ENCODE measurements at regions of chr17 and their contacts with region 1.

Region 1: DNA sequence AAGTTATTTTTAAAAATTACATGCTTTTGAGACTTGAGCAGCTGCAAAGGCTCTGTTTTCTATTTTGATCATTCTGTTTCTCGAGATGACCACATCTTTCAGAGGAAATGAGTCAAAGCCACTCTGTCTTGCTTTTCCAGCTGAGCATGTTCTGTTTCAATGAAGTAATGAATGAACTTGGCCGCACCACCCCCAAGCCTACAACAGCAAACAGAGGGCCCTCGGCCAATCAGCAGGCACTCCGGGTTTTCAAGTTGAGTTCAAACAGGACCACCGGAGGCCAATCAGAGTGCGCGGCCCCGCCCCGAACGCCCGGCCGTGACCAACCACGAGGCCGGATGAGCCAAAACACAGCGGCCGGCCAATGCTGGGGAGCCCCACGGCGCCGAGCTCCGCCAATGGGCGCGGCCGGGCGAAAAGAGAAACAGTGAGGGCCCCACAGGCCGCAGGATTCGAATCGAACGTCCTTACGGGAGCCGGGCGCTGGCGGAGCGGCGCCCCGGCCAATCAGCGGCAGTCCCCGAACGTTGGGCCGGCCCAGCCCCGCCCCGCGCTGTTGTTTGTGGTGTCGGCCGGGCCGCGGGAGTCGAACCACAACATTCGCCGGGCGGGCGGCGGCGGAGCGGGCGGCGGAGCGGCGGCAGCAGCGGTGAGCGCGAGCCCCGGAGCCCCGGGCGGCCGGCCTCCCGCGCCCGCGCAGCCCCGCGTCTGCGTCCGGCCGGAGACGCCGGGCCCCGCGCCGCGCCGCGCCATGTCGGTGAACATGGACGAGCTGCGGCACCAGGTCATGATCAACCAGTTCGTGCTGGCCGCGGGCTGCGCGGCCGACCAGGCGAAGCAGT is at the start of gene UBALD2:
- DNase-seq: peak; percentile 99
- ATAC-seq: peak; percentile 81
- H3K4me3 ChIP-seq: peak within 1 kb of the TSS; percentile 84
- H3K27ac ChIP-seq: peak within 1 kb of the TSS; percentile 99
- H3K4me1 ChIP-seq: peaks cover 56% of the 10 kb centered on the region
- H3K27me3 ChIP-seq: no peaks in the 10 kb centered on the region
- CTCF ChIP-seq: no peak
- EP300 ChIP-seq: peak; percentile 91 to 94
- POLR2A ChIP-seq: peak; percentile 85; the same call in 1 of the 2 replicates
- RAD21 ChIP-seq: 0 out of 2 replicates have a peak, but pooled peaks have one; percentile 1
- polyA plus RNA-seq, gene UBALD2: 4.4 to 16.4 TPM

Region 2: GRCh38 chr17:75784473-75785015 is 480.4 kb before region 1 on chr17 and contains the start of gene UNK:
- CTCF ChIA-PET with region 1: no interaction called
- POLR2A ChIA-PET with region 1: interaction called, 4 read pairs
- RAD21 ChIA-PET with region 1: no interaction called
- SMC1A ChIA-PET with region 1: no interaction called
- in situ Hi-C with region 1: loop called (anchors 5 kb)
- intact Hi-C with region 1: loop called (anchors 10 kb)
- DNase-seq: peak; percentile 96
- ATAC-seq: peak; percentile 80
- H3K4me3 ChIP-seq: peak within 1 kb of the TSS; percentile 79
- H3K27ac ChIP-seq: peak within 1 kb of the TSS; percentile 97
- H3K4me1 ChIP-seq: peaks cover 22% of the 10 kb centered on the region
- H3K27me3 ChIP-seq: no peaks in the 10 kb centered on the region
- CTCF ChIP-seq: no peak
- EP300 ChIP-seq: no peak
- POLR2A ChIP-seq: no peak
- RAD21 ChIP-seq: no peak
- polyA plus RNA-seq, gene UNK: 8.9 to 11.9 TPM

Region 3: DNA sequence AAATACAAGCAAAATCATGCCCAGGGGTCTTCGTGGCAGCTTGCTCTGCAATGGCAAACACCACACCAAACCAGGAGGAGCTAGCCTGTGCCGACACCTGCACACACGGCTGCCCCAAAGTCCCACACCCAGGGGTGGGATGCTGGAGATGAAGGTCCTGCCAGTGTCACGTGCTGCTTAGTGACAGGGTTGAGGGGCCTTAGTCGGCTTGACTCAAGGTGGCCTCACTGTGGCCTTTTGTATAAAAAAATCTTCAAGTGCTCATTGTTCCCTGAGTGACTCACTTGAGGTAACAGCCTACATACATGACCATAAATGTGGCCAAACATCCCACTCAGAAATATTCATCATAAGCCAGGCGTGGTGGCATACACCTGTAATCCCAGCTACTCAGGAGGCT is 375.5 kb before region 1 on chr17:
- CTCF ChIA-PET with region 1: no interaction called
- POLR2A ChIA-PET with region 1: no interaction called
- RAD21 ChIA-PET with region 1: no interaction called
- SMC1A ChIA-PET with region 1: no interaction called
- in situ Hi-C with region 1: no loop called
- intact Hi-C with region 1: no loop called
- DNase-seq: no peak
- ATAC-seq: peak; percentile 44; the same call in 2 of the 3 replicates
- H3K4me3 ChIP-seq: no peak overlapping the region
- H3K27ac ChIP-seq: no peak overlapping the region
- H3K4me1 ChIP-seq: no peaks in the 10 kb centered on the region
- H3K27me3 ChIP-seq: no peaks in the 10 kb centered on the region
- CTCF ChIP-seq: no peak
- EP300 ChIP-seq: no peak
- POLR2A ChIP-seq: no peak
- RAD21 ChIP-seq: no peak

Region 4: GRCh38 chr17:76182016-76182764 is 82.8 kb before region 1 on chr17:
- CTCF ChIA-PET with region 1: interaction called, 160 read pairs
- POLR2A ChIA-PET with region 1: interaction called, 427 read pairs
- RAD21 ChIA-PET with region 1: interaction called, 419 read pairs
- SMC1A ChIA-PET with region 1: interaction called, 152 read pairs
- in situ Hi-C with region 1: loop called (anchors 5 kb)
- intact Hi-C with region 1: no loop called
- DNase-seq: peak; percentile 94
- ATAC-seq: peak; percentile 83
- H3K4me3 ChIP-seq: no peak overlapping the region
- H3K27ac ChIP-seq: peak overlapping the region; percentile 24; the same call in 1 of the 2 replicates
- H3K4me1 ChIP-seq: peaks cover 30% of the 10 kb centered on the region
- H3K27me3 ChIP-seq: no peaks in the 10 kb centered on the region
- CTCF ChIP-seq: peak; percentile 83 to 97 (median 93); a peak in 5 of 6 replicates
- EP300 ChIP-seq: no peak
- POLR2A ChIP-seq: no peak
- RAD21 ChIP-seq: peak; percentile 81

Region 5: GRCh38 chr17:76208120-76208519 is 56.9 kb before region 1 on chr17:
- CTCF ChIA-PET with region 1: interaction called, 3 read pairs
- POLR2A ChIA-PET with region 1: interaction called, 12 read pairs
- RAD21 ChIA-PET with region 1: interaction called, 4 read pairs
- SMC1A ChIA-PET with region 1: interaction called, 7 read pairs
- in situ Hi-C with region 1: no loop called
- intact Hi-C with region 1: no loop called
- DNase-seq: peak; percentile 66
- ATAC-seq: peak; percentile 95
- H3K4me3 ChIP-seq: no peak overlapping the region
- H3K27ac ChIP-seq: peak overlapping the region; percentile 51
- H3K4me1 ChIP-seq: peaks cover 17% of the 10 kb centered on the region
- H3K27me3 ChIP-seq: no peaks in the 10 kb centered on the region
- CTCF ChIP-seq: no peak
- EP300 ChIP-seq: no peak
- POLR2A ChIP-seq: no peak
- RAD21 ChIP-seq: no peak

Region 6: DNA sequence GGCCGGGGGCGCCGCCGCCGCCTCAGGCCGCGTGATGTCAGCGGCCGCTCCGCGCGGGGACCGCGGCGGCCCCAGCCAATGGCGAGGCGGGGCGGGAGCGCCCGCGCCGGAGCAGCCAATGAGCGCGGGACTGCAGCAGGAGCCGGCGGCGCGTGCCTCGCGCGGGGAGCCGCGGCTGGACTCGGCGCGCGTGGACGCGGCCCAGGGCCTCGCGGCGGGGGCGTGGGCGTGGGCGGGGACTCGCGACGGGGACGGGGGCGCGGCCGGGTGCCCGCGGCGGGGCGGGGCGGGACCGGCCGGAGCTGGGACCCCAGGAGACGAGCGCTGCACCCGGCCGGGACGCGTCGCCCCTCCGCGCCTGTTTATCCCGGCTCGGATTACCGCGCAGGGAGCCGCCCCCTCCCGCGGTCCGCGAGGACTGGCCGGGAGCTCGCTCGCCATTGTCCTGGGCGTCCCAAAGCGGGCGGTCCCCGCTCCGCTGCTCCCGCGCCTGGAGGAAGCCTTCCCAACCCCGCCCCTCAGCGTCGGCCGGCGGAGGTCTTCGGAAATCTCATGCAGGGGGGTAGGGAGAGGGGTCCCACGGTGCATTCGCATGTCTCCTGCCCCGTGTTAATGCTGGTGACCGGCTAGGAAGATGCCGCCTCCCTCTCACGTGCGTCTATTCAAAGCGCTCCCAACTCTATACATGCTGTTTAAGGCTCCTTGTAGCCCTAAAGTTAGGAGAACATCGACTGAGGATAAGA is 24.3 kb before region 1 on chr17 and contains the start of gene RNF157:
- CTCF ChIA-PET with region 1: interaction called, 82 read pairs
- POLR2A ChIA-PET with region 1: interaction called, 341 read pairs
- RAD21 ChIA-PET with region 1: interaction called, 124 read pairs
- SMC1A ChIA-PET with region 1: interaction called, 226 read pairs
- in situ Hi-C with region 1: no loop called
- intact Hi-C with region 1: no loop called
- DNase-seq: no peak
- ATAC-seq: peak; percentile 74
- H3K4me3 ChIP-seq: peak within 1 kb of the TSS; percentile 56; the same call in 1 of the 2 replicates
- H3K27ac ChIP-seq: no peak within 1 kb of the TSS
- H3K4me1 ChIP-seq: peaks cover 20% of the 10 kb centered on the region
- H3K27me3 ChIP-seq: peaks cover 0 to 3% of the 10 kb centered on the region in 2 experiments; a peak in 2 of 4 replicates
- CTCF ChIP-seq: no peak
- EP300 ChIP-seq: no peak
- POLR2A ChIP-seq: no peak
- RAD21 ChIP-seq: no peak
- polyA plus RNA-seq, gene RNF157: 5.2 to 9.5 TPM

Region 7: GRCh38 chr17:76252040-76252954 is 12.7 kb before region 1 on chr17:
- CTCF ChIA-PET with region 1: interaction called, 82 read pairs
- POLR2A ChIA-PET with region 1: interaction called, 341 read pairs
- RAD21 ChIA-PET with region 1: interaction called, 124 read pairs
- SMC1A ChIA-PET with region 1: interaction called, 226 read pairs
- in situ Hi-C with region 1: no loop called
- intact Hi-C with region 1: loop called (anchors 1 kb)
- DNase-seq: no peak
- ATAC-seq: peak; percentile 94
- H3K4me3 ChIP-seq: peak overlapping the region; percentile 46; the same call in 1 of the 2 replicates
- H3K27ac ChIP-seq: peak overlapping the region; percentile 70
- H3K4me1 ChIP-seq: peaks cover 32% of the 10 kb centered on the region
- H3K27me3 ChIP-seq: no peaks in the 10 kb centered on the region
- CTCF ChIP-seq: no peak
- EP300 ChIP-seq: no peak
- POLR2A ChIP-seq: peak; percentile 62
- RAD21 ChIP-seq: no peak

Region 8: GRCh38 chr17:76327696-76328095 is 62.7 kb after region 1 on chr17:
- CTCF ChIA-PET with region 1: no interaction called
- POLR2A ChIA-PET with region 1: no interaction called
- RAD21 ChIA-PET with region 1: no interaction called
- SMC1A ChIA-PET with region 1: no interaction called
- in situ Hi-C with region 1: no loop called
- intact Hi-C with region 1: no loop called
- DNase-seq: no peak
- ATAC-seq: no peak
- H3K4me3 ChIP-seq: no peak overlapping the region
- H3K27ac ChIP-seq: no peak overlapping the region
- H3K4me1 ChIP-seq: no peaks in the 10 kb centered on the region
- H3K27me3 ChIP-seq: no peaks in the 10 kb centered on the region
- CTCF ChIP-seq: no peak
- EP300 ChIP-seq: no peak
- POLR2A ChIP-seq: no peak
- RAD21 ChIP-seq: no peak

Region 9: DNA sequence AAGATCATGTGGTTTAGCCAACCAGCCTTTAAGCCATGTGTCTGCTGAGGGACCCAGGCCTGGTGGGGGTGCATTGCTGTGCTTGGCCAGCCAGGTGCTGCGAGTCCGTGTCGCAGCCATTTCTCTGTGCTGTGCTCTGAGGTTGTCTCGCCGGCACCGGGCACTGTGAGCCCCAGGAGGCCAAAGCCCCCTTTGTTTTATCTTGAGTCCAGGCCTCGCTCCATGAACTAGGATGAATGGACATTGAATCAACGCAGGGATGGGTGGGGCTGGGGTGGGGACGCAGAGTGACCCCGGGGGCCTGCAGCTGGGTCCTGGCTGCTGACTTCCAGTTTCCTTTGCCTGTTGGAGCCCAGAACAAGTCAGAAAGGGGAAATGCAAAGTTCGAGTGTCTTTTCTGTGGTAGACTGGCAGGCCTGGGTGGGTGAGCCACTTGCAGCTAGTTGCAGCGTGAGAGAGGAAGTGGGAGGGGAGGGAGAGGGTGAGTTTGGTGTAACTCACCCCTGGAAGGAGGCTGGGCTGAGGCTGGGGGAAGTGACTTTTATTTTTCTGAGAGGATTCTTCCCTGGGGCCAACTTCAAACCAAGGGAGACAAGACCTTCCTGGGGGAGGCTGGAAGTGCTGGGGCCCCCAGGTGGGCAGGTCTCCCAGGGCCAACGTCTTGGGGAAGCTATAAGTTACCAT is 1200.5 kb after region 1 on chr17:
- CTCF ChIA-PET with region 1: no interaction called
- POLR2A ChIA-PET with region 1: no interaction called
- RAD21 ChIA-PET with region 1: no interaction called
- SMC1A ChIA-PET with region 1: no interaction called
- in situ Hi-C with region 1: loop called (anchors 25 kb)
- intact Hi-C with region 1: no loop called
- DNase-seq: peak; percentile 86
- ATAC-seq: peak; percentile 82
- H3K4me3 ChIP-seq: peak overlapping the region; percentile 36; the same call in 1 of the 2 replicates
- H3K27ac ChIP-seq: peak overlapping the region; percentile 85
- H3K4me1 ChIP-seq: peaks cover 63% of the 10 kb centered on the region
- H3K27me3 ChIP-seq: no peaks in the 10 kb centered on the region
- CTCF ChIP-seq: no peak
- EP300 ChIP-seq: peak; percentile 29 to 50; a peak in 2 of 4 replicates
- POLR2A ChIP-seq: peak; percentile 48; the same call in 1 of the 2 replicates
- RAD21 ChIP-seq: no peak

Measured in GM12878 (cell line).